Psoas muscle (tissue), 8 donors: ENCODE measurements at regions of chr18 and their contacts with region 1.

Region 1: DNA sequence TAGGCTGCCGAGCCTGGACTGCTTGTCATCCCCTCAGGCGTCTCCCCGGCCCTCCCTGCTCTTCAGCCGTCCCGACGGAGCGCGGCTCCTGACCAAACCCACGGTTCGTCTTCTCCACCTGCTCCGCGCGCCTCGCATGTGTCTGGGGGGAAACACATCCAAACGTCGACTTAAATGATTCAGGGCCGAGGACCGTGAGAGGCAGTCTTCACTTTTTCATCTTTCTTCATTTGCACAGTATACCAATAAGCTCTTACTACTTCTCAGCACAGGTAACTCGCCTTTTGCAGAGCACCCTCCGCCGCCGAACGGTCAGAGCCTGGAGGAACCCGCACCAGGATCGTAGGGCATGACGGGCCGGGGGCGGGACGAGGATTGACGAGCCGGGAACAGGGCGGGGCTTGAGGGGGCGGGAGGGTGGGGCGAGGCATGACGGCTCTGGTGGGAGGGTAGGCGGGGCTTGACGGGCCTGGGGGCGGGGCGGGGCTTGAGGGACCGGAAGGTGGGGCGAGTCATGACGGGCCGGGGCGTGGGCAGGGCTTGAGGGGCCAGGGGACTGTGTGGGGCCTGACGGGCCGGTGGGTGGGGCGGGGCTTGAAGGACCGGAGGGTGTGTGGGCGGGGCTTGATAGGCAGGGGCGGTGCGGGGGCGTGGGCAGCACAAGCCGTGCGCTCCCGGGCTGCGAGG is at the start of gene SEH1L:
- DNase-seq: peak; percentile 100
- ATAC-seq: peak; percentile 96 to 98 (median 96)
- H3K4me3 ChIP-seq: peak within 1 kb of the TSS; percentile 89
- H3K27ac ChIP-seq: peak within 1 kb of the TSS; percentile 98
- H3K4me1 ChIP-seq: peaks cover 16% of the 10 kb centered on the region
- H3K27me3 ChIP-seq: no peaks in the 10 kb centered on the region
- CTCF ChIP-seq: no peak
- total RNA-seq, gene SEH1L: 22.7 to 53.4 (median 36.7) TPM

Region 2: GRCh38 chr18:12408247-12408869 is 539.1 kb before region 1 on chr18:
- intact Hi-C with region 1: loop called in 1 of 2 experiments (anchors 10 kb)
- DNase-seq: no peak
- ATAC-seq: no peak
- H3K4me3 ChIP-seq: peak overlapping the region; percentile 68
- H3K27ac ChIP-seq: peak overlapping the region; percentile 77
- H3K4me1 ChIP-seq: peaks cover 14% of the 10 kb centered on the region
- H3K27me3 ChIP-seq: peaks cover 0 to 12% (median 0%) of the 10 kb centered on the region in 3 donors
- CTCF ChIP-seq: no peak

Region 3: DNA sequence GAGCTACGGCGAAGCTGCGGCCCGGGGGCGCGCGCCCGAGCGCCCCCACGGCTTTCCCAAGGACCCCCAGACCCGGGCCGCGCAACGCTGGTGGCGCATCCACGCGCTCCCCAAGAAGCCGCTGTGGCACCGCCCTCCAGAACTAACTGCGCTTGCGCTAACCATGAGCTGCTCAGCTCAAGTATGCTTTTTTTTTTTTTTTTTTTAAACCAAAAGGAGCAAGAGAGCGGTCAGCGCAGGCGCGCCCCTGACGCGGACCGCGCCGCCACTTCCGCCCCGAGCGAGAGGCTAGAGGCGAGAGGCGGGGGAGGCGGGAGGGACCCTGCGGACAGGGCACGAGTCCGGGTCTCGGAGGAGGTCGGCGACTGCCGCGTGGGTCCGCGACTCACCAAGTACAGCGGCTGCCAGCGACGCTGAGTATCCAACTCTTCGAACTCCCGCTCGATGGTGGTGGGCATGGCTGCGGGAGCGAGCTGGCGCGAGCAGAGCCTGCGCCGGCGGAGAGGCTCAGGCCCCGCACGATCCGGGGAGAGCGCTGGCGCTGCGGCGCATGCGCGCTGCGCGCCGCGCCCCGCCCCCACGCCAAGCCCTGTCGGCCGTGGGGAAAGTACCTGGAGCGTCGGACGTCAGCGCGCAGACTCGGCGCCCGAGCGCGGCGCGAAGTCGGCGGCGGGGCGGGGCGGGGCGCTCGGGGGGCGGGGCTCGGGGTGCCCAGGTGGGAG is 63.7 kb before region 1 on chr18 and contains the start of gene PTPN2:
- intact Hi-C with region 1: loop called (anchors 2 to 5 kb)
- DNase-seq: peak; percentile 95 to 97
- ATAC-seq: peak; percentile 96 to 97 (median 96)
- H3K4me3 ChIP-seq: peak within 1 kb of the TSS; percentile 76
- H3K27ac ChIP-seq: peak within 1 kb of the TSS; percentile 99
- H3K4me1 ChIP-seq: peaks cover 30% of the 10 kb centered on the region
- H3K27me3 ChIP-seq: no peaks in the 10 kb centered on the region
- CTCF ChIP-seq: no peak
- total RNA-seq, gene PTPN2: 8.4 to 21.9 (median 14.5) TPM

Region 4: DNA sequence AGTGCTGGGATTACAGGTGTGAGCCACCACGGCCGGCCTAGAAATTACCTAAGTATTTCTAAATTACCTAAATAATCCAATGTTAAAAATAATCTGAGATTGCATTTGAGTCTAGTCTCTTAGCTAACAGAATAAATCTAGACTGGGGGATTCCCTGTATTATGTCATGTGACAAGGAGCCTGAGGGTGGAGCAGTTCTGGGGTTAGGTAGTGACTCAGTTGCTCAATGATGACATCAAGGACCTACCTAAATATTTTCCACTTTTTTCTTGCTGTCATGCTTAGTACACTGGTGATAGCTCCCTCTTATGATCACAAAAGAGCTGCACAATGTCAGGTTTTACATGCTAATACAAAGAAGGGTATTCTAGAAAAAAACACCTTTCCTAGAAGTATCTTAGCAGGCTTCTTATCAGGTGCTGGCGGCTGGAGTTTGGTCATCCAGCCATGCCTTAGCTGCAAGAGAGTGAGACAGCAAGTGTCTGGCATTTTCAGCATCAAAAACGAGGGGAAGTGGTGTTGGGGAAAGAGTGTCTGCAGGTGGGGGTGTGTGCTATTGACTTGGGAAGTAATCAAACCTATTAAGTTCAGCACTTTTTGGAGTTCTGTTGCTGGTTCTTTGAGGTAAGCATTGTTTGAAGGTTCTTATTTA is 26.2 kb after region 1 on chr18:
- intact Hi-C with region 1: no loop called
- DNase-seq: no peak
- ATAC-seq: no peak
- H3K4me3 ChIP-seq: no peak overlapping the region
- H3K27ac ChIP-seq: no peak overlapping the region
- H3K4me1 ChIP-seq: no peaks in the 10 kb centered on the region
- H3K27me3 ChIP-seq: no peaks in the 10 kb centered on the region
- CTCF ChIP-seq: no peak

Region 5: GRCh38 chr18:12998332-12999060 is 51.0 kb after region 1 on chr18:
- intact Hi-C with region 1: loop called in 1 of 2 experiments (anchors 5 kb)
- DNase-seq: no peak
- ATAC-seq: no peak
- H3K4me3 ChIP-seq: no peak overlapping the region
- H3K27ac ChIP-seq: no peak overlapping the region
- H3K4me1 ChIP-seq: peaks cover 2% of the 10 kb centered on the region
- H3K27me3 ChIP-seq: no peaks in the 10 kb centered on the region
- CTCF ChIP-seq: no peak